WTC11 (cell line): ENCODE measurements at regions of chr3 and their contacts with region 1.

Region 1: DNA sequence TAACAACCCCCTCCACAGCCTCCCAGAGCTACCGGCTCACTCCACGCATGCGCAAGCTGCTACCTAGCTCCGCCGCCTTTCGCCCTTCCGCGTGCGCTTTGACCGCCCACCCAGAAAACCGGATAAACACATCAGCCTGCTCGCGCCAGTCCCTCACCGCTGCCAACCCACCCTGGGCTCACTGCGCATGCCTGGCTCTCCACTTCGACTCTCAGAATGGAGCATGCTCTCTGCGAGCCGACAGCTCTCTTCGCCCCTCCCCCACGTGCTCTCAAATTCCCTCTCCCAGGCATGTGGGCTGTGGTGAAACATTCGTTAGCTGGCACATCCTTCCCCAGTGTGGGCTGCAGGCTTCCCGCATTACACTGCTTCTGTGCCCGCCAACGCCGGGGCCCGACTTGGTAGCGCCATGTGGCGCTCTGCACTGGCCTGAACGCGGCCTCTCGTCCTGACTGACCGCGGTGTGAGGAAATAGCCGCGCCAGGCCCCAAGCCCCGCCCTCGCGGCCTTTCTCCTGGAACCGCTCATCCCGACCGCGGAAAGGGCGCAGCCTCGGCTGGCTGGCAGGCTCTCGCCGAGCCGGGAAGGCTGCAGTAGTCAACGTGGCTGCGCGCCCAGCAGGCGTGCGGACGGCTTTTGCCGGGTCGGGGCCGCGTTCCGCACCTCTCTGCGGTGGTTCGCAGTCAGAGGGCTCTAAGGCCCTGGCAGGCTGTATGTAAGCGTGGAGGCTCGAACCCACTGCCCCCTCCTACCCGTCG is 445 bp upstream of the MSL2 start:
- DNase-seq: peak; percentile 98
- ATAC-seq: peak; percentile 79
- H3K4me3 Mint-ChIP-seq: peak overlapping the region; percentile 97
- H3K27ac Mint-ChIP-seq: peak overlapping the region; percentile 100
- H3K4me1 Mint-ChIP-seq: peaks cover 38% of the 10 kb centered on the region
- H3K27me3 Mint-ChIP-seq: peaks cover 2% of the 10 kb centered on the region; the same call in 1 of the 2 replicates
- CTCF ChIP-seq: no peak

Region 2: GRCh38 chr3:136036306-136036705 is 160.3 kb before region 1 on chr3:
- CTCF ChIA-PET with region 1: no interaction called
- POLR2A ChIA-PET with region 1: no interaction called
- DNase-seq: no peak
- ATAC-seq: no peak
- H3K4me3 Mint-ChIP-seq: no peak overlapping the region
- H3K27ac Mint-ChIP-seq: no peak overlapping the region
- H3K4me1 Mint-ChIP-seq: 0 out of 2 replicates have a peak, but pooled peaks cover 2% of the 10 kb centered on the region
- H3K27me3 Mint-ChIP-seq: no peaks in the 10 kb centered on the region
- CTCF ChIP-seq: no peak

Region 3: DNA sequence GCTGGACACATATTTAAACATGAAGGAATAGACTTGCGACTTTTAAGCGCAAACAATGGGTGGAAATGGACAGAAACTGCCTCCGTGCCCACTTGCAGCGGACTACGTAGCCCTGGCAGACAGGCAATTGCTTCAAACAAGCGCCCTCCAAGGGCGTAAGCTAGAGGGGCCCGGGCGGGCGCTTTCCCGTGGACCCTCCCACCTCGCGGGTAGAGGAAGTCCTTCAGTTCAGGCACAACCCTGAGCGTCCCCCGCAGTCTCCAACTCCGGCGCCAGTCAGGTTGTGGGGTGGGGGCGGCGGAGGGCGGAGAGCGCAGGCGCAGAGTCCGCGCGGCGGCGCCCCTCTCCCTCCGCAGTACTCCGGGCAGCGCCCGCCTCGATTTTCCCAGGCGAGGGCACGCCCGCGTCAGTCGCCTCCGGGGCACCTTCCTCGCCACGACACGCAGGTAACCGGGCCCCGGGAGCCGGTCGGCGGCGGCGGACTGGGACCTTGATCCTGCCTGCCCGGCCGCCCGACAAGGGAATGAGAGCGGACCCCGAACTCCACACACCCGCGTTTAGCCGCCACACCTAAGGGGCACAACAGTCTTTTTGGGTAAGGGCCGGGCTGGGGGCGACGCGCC is 622.3 kb after region 1 on chr3 and contains the start of gene SLC35G2:
- CTCF ChIA-PET with region 1: no interaction called
- POLR2A ChIA-PET with region 1: interaction called, 12 read pairs
- DNase-seq: peak; percentile 78
- ATAC-seq: peak; percentile 78
- H3K4me3 Mint-ChIP-seq: peak within 1 kb of the TSS; percentile 87
- H3K27ac Mint-ChIP-seq: peak within 1 kb of the TSS; percentile 54; the same call in 1 of the 2 replicates
- H3K4me1 Mint-ChIP-seq: peaks cover 24% of the 10 kb centered on the region
- H3K27me3 Mint-ChIP-seq: peaks cover 31% of the 10 kb centered on the region
- CTCF ChIP-seq: no peak
- total RNA-seq, gene SLC35G2: 3.3 to 3.6 TPM (median 3.6 TPM) in 3 replicates